Posterior vena cava (tissue), 2 donors: ENCODE measurements at regions of chr19 and their contacts with region 1.

Region 1: GRCh38 chr19:47404334-47405196 is 14.8 kb downstream of the MEIS3 start:
- DNase-seq: no peak

Region 2: DNA sequence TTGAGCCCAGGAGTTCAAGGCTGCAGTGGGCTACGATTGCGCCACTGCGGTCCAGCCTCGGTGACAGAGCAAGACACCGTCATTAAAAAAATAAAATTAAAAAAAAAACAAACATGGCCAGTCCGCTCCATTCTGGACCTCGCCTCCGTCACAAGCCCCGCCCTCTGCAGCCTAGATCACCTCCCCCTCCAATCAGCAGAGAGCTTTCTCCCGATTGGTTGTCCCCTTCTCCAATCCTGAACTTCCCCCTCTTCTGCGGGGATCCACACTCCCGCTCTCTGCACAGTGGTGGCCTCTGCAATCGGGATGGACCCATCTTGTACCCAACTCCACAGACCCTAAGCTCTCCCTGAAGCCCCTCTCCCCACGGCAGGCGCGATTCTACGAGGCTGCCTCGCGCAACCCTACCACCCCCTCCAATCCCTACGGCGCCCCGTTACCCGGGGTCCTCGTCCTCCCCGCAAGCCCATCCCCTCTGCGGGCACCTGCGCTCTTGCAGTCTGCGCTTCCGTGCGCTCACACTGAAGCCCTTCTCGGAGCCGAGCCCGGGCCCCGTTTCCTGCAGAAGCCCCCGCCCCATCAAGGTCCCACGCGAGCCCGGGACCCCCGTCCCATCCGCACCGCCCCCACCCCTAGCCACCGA is 356.7 kb before region 1 on chr19:
- intact Hi-C with region 1: loop called in 1 of 2 experiments (anchors 5 kb)
- DNase-seq: peak; percentile 92

Region 3: DNA sequence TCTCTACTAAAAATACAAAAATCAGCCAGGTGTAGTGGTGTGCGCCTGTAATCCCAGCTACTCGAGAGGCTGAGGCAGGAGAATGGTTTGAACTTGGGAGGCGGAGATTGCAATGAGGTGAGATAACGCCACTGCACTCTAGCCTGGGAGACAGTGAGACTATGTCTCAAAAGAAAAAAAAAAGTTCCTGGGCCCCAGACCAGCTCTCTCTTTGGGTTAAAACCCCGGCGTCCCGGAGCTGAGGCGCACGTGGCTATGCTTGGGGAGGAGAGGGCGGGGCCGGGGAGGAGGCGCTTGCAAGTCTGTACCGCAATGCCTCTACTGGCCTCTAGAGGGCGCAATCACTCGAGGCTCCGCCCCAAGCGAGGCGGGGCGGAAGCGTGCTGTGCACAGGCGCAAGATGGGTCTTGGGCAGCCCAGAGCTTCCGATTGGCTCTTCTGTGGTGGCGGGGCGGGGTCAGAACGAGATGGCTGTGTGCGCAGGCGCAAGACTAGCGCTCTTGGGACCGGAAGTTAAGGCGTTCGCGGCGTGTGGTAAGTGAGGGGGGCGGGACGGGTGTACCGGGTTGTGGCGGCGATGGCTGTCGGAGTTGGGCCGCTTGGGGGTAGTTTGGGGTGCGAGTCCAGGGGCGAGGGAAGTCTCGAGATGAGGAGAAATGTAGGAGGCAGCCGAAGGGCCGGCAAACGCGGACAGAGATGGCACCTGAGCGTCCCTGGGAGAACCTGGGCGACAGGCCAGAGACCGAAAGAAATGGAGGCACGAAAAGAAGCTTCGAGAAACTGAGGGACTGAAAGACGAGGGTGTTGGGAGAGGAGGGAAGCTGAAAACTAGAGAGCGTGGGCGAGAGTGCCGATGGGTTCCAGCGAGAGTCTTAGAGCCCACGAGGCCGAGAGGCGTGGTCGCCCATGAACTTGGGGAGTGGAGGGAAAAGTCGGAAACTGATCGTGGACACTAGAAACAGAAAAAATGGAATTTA is 55.5 kb before region 1 on chr19 and contains the start of gene DHX34:
- intact Hi-C with region 1: no loop called
- DNase-seq: peak; percentile 100
- total RNA-seq, gene DHX34: 7.7 to 7.9 TPM